Sigmoid colon (tissue), 7 donors: ENCODE measurements at regions of chr16 and their contacts with region 1.

Region 1: GRCh38 chr16:85717393-85718121 is 28.8 kb upstream of the GINS2 start:
- DNase-seq: peak; percentile 85
- H3K4me3 ChIP-seq: no peak overlapping the region
- H3K27ac ChIP-seq: no peak overlapping the region
- H3K4me1 ChIP-seq: peaks cover 0 to 15% (median 4%) of the 10 kb centered on the region in 4 donors
- H3K27me3 ChIP-seq: no peaks in the 10 kb centered on the region
- CTCF ChIP-seq: peak; percentile 53 to 77 (median 65)
- EP300 ChIP-seq: no peak
- POLR2A ChIP-seq: no peak

Region 2: DNA sequence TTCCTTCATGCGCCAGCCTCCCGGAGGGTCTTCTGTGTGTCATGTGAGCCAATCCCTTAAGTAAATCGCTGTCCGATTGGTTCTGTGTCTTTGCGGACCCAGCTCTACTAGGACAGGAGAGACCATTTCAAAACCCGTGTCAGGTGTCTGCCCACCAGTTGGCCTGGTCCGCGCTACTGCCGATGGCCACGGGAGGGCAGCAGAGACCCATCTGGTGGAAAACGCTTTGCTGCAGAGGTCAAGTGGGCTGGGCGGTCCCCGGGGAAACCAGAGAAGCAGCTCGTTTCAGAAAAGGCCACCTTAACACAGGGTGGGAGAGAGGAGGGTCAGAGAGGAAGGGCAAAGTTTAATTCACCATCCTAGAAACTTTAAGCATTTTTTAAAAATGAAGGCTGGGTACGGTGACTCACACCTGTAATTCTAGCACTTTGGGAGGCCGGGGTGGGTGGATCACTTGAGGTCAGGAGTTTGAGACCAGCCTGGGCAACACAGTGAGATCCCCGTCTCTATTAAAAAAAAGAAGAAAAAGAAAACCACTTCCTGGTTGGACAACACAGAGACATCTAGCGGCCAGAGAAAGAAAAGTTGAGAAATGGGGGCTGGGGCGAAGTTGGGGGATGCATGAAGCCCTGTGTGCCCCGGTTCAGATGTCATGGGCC is 602.5 kb before region 1 on chr16:
- intact Hi-C with region 1: loop called (anchors 10 kb)
- DNase-seq: peak; percentile 93
- H3K4me3 ChIP-seq: peak overlapping the region in 3 of 4 donors; percentile 11 to 34 (median 25)
- H3K27ac ChIP-seq: peak overlapping the region in 3 of 4 donors; percentile 32 to 62 (median 52)
- H3K4me1 ChIP-seq: peaks cover 0 to 8% (median 6%) of the 10 kb centered on the region in 4 donors
- H3K27me3 ChIP-seq: no peaks in the 10 kb centered on the region
- CTCF ChIP-seq: peak; percentile 97 to 98 (median 98)
- EP300 ChIP-seq: no peak
- POLR2A ChIP-seq: no peak

Region 3: GRCh38 chr16:85275533-85276249 is 441.9 kb before region 1 on chr16:
- intact Hi-C with region 1: loop called (anchors 1 kb)
- DNase-seq: peak; percentile 86
- H3K4me3 ChIP-seq: no peak overlapping the region
- H3K27ac ChIP-seq: no peak overlapping the region
- H3K4me1 ChIP-seq: peaks cover 0 to 15% (median 2%) of the 10 kb centered on the region in 4 donors
- H3K27me3 ChIP-seq: no peaks in the 10 kb centered on the region
- CTCF ChIP-seq: peak; percentile 74 to 90 (median 78)
- EP300 ChIP-seq: no peak
- POLR2A ChIP-seq: no peak

Region 4: GRCh38 chr16:85305996-85306792 is 411.4 kb before region 1 on chr16:
- intact Hi-C with region 1: loop called (anchors 5 kb)
- DNase-seq: peak; percentile 96
- H3K4me3 ChIP-seq: no peak overlapping the region
- H3K27ac ChIP-seq: peak overlapping the region in 3 of 4 donors; percentile 8 to 46 (median 45)
- H3K4me1 ChIP-seq: peaks cover 0 to 63% (median 39%) of the 10 kb centered on the region in 4 donors
- H3K27me3 ChIP-seq: no peaks in the 10 kb centered on the region
- CTCF ChIP-seq: no peak
- EP300 ChIP-seq: no peak
- POLR2A ChIP-seq: no peak

Region 5: GRCh38 chr16:85393674-85394483 is 323.7 kb before region 1 on chr16:
- intact Hi-C with region 1: loop called (anchors 10 kb)
- DNase-seq: peak; percentile 88
- H3K4me3 ChIP-seq: peak overlapping the region in 1 of 4 donors; percentile 11
- H3K27ac ChIP-seq: peak overlapping the region; percentile 81 to 91 (median 86)
- H3K4me1 ChIP-seq: peaks cover 0 to 74% (median 68%) of the 10 kb centered on the region in 4 donors
- H3K27me3 ChIP-seq: no peaks in the 10 kb centered on the region
- CTCF ChIP-seq: peak; percentile 86 to 95 (median 87)
- EP300 ChIP-seq: no peak
- POLR2A ChIP-seq: no peak

Region 6: GRCh38 chr16:85420501-85421337 is 296.8 kb before region 1 on chr16:
- intact Hi-C with region 1: loop called (anchors 5 kb)
- DNase-seq: peak; percentile 72
- H3K4me3 ChIP-seq: no peak overlapping the region
- H3K27ac ChIP-seq: no peak overlapping the region
- H3K4me1 ChIP-seq: peaks cover 0 to 21% (median 19%) of the 10 kb centered on the region in 4 donors
- H3K27me3 ChIP-seq: no peaks in the 10 kb centered on the region
- CTCF ChIP-seq: peak; percentile 92 to 99 (median 98)
- EP300 ChIP-seq: no peak
- POLR2A ChIP-seq: no peak

Region 7: GRCh38 chr16:85659805-85660495 is 57.6 kb before region 1 on chr16:
- intact Hi-C with region 1: loop called (anchors 5 kb)
- DNase-seq: peak; percentile 75
- H3K4me3 ChIP-seq: no peak overlapping the region
- H3K27ac ChIP-seq: peak overlapping the region in 2 of 4 donors; percentile 4 to 44
- H3K4me1 ChIP-seq: peaks cover 0 to 13% (median 10%) of the 10 kb centered on the region in 4 donors
- H3K27me3 ChIP-seq: no peaks in the 10 kb centered on the region
- CTCF ChIP-seq: peak; percentile 56 to 79 (median 73)
- EP300 ChIP-seq: no peak
- POLR2A ChIP-seq: no peak